PC-9 (cell line): ENCODE measurements at regions of chr4 and their contacts with region 1.

Region 1: GRCh38 chr4:27000820-27001219 is 140.2 kb downstream of the STIM2 start:
- DNase-seq: no peak
- H3K4me3 ChIP-seq: no peak overlapping the region
- H3K27ac ChIP-seq: no peak overlapping the region
- H3K4me1 ChIP-seq: no peaks in the 10 kb centered on the region
- H3K27me3 ChIP-seq: no peaks in the 10 kb centered on the region
- CTCF ChIP-seq: peak; percentile 30; the same call in 1 of the 2 replicates

Region 2: GRCh38 chr4:26746802-26747213 is 254.0 kb before region 1 on chr4:
- CTCF ChIA-PET with region 1: no interaction called
- POLR2A ChIA-PET with region 1: no interaction called
- intact Hi-C with region 1: loop called (anchors 10 kb)
- DNase-seq: no peak
- H3K4me3 ChIP-seq: no peak overlapping the region
- H3K27ac ChIP-seq: no peak overlapping the region
- H3K4me1 ChIP-seq: no peaks in the 10 kb centered on the region
- H3K27me3 ChIP-seq: no peaks in the 10 kb centered on the region
- CTCF ChIP-seq: no peak